PC-3 (cell line): ENCODE measurements at regions of chr11 and their contacts with region 1.

Region 1: GRCh38 chr11:22875869-22876473 is 15.7 kb upstream of the CCDC179 start:
- DNase-seq: peak; percentile 89
- ATAC-seq: peak; percentile 76
- H3K4me3 ChIP-seq: no peak overlapping the region
- H3K27ac ChIP-seq: no peak overlapping the region
- H3K4me1 ChIP-seq: no peaks in the 10 kb centered on the region
- H3K27me3 ChIP-seq: no peaks in the 10 kb centered on the region
- CTCF ChIP-seq: peak; percentile 87

Region 2: GRCh38 chr11:22742157-22742613 is 133.8 kb before region 1 on chr11:
- CTCF ChIA-PET with region 1: no interaction called
- POLR2A ChIA-PET with region 1: no interaction called
- intact Hi-C with region 1: no loop called
- DNase-seq: no peak
- ATAC-seq: no peak
- H3K4me3 ChIP-seq: no peak overlapping the region
- H3K27ac ChIP-seq: no peak overlapping the region
- H3K4me1 ChIP-seq: no peaks in the 10 kb centered on the region
- H3K27me3 ChIP-seq: peaks cover 46% of the 10 kb centered on the region
- CTCF ChIP-seq: no peak

Region 3: DNA sequence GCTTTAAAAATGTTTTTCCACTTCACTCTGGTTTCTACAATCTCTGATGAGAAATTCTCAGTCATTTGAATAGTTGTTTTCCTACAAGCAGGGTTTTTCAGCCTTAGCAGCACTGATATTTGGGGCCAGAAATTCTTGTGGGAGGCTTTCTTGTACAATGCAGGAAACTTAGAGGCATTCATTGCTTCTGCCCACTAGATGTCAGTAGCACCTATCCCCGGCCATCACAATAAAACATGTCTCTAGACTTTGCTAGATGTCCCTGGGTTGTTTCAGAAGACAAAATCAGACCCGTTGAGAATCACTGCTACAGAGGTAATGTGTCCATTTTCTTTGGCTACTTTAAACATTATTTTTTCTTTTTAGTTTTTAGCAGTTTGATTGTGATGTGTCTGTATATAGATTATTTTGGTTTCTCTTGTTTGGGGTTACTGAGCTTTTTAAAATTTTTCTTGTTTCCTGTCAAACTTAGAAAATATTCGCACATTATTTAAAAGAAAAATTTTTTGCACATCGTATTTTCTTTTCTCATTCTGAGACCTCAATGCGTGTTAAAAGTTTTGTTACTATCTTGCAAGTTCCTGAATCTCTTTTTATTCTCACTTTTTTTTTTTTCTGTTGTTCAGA is 45.1 kb after region 1 on chr11:
- CTCF ChIA-PET with region 1: no interaction called
- POLR2A ChIA-PET with region 1: no interaction called
- intact Hi-C with region 1: loop called (anchors 1 kb)
- DNase-seq: peak; percentile 64
- ATAC-seq: peak; percentile 77
- H3K4me3 ChIP-seq: no peak overlapping the region
- H3K27ac ChIP-seq: no peak overlapping the region
- H3K4me1 ChIP-seq: no peaks in the 10 kb centered on the region
- H3K27me3 ChIP-seq: no peaks in the 10 kb centered on the region
- CTCF ChIP-seq: peak; percentile 76

Region 4: DNA sequence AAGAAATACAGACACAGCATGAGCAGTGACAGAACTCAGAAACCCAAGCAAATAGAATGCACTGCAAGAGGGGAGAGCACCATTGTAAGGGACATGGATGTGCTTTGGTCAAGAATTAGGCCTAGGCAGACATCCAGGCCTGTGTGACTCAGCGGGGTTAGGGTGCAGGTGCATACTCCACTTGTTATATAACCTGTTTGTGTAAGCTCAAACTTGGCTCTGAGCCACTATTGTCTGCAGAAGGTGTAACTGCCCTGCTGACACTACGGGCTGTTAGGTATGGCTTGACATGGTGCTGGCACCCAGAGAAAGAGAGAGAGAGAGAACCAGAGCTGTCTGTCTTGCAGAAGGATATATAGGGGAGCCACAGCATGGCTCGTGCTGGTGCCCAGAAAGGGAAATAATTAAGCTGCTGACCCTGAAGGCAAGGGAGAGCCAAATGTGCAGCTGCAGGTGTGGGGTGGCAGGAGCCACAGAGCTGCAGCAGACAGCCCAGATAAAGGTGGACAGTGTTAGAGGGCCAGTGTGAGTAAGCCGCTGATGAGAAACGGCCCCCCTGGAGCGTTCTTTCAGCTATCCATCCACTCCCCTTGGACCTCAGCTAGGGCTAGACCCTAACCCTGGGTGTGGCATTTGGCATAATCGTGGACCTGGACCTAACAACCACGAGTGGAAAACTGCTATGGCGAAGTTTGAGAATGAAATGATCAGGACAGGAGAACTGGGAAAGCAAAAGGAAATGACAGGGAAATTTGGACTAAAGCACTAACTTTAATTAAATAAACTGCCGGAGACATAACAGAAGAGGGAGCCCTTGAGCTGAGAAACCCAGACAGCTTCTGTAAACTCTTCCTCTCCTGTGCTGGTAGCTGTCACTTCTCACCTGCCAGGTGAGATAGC is 237.3 kb after region 1 on chr11:
- CTCF ChIA-PET with region 1: interaction called, 3 read pairs
- POLR2A ChIA-PET with region 1: no interaction called
- intact Hi-C with region 1: loop called (anchors 1 kb)
- DNase-seq: peak; percentile 85
- ATAC-seq: peak; percentile 89
- H3K4me3 ChIP-seq: peak overlapping the region; percentile 51; the same call in 1 of the 2 replicates
- H3K27ac ChIP-seq: peak overlapping the region; percentile 34
- H3K4me1 ChIP-seq: peaks cover 13% of the 10 kb centered on the region; the same call in 1 of the 2 replicates
- H3K27me3 ChIP-seq: no peaks in the 10 kb centered on the region
- CTCF ChIP-seq: peak; percentile 77

Region 5: DNA sequence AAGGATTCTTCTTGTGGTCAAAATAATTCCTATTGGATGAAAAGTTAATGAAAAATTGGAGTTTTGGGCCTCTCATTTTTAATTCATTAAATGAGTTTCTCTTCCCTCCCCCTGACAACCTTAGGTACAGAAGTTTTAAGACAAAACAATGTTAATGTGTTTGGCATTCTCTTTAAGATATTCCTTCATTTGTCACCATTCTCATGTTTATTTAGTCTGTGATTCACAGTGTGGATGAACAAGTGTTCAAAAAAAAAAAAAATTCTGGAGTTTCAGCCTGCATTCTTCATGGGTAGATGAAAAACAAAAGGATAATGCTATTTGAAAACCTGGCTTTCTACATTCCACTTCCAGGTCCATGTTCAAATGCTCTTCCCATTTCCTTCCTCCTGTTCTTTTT is 1448.2 kb after region 1 on chr11:
- CTCF ChIA-PET with region 1: no interaction called
- POLR2A ChIA-PET with region 1: no interaction called
- intact Hi-C with region 1: loop called (anchors 5 kb)
- DNase-seq: peak; percentile 40
- ATAC-seq: peak; percentile 68
- H3K4me3 ChIP-seq: no peak overlapping the region
- H3K27ac ChIP-seq: no peak overlapping the region
- H3K4me1 ChIP-seq: peaks cover 8% of the 10 kb centered on the region
- H3K27me3 ChIP-seq: no peaks in the 10 kb centered on the region
- CTCF ChIP-seq: no peak

Region 6: DNA sequence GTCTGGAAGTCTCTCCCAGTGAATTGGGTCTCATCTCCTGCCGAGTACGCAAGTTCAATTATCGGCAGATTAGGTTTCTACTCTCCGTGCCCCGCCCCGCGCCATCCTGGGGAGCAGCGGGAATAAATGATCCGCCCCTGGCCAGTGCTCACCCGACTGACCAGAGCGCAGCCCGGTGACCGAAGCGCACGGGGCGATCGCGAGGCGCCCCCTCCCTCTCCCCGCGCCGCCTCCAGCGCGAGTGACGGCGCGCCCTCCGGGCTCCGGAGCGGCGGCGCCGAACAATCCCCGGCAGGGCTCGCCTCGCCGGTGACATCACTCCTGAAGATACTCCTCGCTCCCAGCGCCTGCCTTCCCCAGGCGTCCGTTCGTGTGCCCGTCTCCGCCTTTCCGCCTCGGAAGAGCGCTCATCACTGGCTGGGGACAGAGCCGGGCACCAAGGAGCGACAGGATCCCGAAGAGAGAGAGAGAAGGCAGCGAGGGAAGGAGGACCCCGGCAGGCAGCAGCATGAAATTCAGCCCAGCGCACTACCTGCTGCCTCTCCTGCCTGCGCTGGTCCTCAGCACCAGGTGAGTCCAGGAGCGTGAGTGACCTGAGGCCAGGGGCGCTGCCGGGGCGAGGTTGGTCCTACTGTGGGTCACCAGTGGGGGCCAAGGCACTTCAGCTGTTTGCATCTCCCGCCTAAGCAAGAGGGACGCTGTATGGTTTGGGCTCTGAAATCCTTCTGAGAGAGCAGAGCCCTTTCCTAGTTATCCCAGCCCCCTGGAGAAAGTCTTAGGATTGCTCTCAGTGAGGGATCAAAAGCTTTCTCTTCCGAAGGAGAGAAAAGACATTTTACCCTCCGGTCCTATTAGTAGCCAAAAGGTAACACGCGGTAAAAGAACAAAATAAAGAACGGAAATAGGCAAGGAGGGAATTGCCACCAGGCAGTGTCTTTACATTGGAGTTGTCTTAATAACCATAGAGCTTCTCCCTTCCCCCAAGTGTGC is 1621.1 kb after region 1 on chr11 and contains the start of gene LUZP2:
- CTCF ChIA-PET with region 1: no interaction called
- POLR2A ChIA-PET with region 1: no interaction called
- intact Hi-C with region 1: loop called (anchors 5 kb)
- DNase-seq: peak; percentile 50
- ATAC-seq: peak; percentile 84
- H3K4me3 ChIP-seq: peak within 1 kb of the TSS; percentile 82
- H3K27ac ChIP-seq: no peak within 1 kb of the TSS
- H3K4me1 ChIP-seq: no peaks in the 10 kb centered on the region
- H3K27me3 ChIP-seq: peaks cover 18% of the 10 kb centered on the region; the same call in 1 of the 2 replicates
- CTCF ChIP-seq: no peak
- total RNA-seq, gene LUZP2: 0.11 and 0.46 TPM in 2 replicates